AG04450 (cell line): ENCODE measurements at regions of chr11 and their contacts with region 1.

Region 1: GRCh38 chr11:60899046-60899936 is 7.1 kb downstream of the PRPF19 start:
- DNase-seq: peak; percentile 24
- H3K4me3 ChIP-seq: no peak overlapping the region
- H3K27ac ChIP-seq: peak overlapping the region; percentile 31
- H3K27me3 ChIP-seq: no peaks in the 10 kb centered on the region
- CTCF ChIP-seq: peak; percentile 99

Region 2: DNA sequence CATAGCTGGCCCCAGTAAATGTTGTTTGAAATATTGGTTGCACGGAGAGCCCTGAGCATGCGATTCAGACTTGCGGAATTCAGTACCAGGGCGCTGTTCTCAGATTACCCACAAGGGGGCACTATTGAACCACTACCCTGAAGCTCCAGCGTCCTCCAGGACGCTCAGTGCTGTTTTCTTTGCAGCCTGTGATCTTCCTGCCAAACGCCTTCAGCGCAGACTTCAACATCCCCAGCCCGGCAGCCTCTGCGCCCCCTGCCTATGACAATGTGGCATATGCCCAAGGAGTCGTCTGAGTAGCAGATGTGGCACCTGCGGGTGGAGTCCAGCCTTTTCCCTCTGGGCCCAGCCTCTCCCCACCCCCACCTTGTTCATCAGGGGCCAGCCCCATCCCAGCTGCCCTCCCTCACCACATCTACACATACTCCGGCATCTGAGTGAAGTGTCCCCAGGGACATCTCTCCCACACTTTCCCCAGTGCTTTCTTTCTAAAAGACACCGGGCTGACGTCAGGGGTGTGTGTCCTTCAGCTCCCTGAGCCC is 123.8 kb before region 1 on chr11:
- CTCF ChIA-PET with region 1: interaction called, 65 read pairs
- POLR2A ChIA-PET with region 1: no interaction called
- DNase-seq: peak; percentile 81
- H3K4me3 ChIP-seq: no peak overlapping the region
- H3K27ac ChIP-seq: no peak overlapping the region
- H3K27me3 ChIP-seq: peaks cover 3% of the 10 kb centered on the region
- CTCF ChIP-seq: peak; percentile 91

Region 3: DNA sequence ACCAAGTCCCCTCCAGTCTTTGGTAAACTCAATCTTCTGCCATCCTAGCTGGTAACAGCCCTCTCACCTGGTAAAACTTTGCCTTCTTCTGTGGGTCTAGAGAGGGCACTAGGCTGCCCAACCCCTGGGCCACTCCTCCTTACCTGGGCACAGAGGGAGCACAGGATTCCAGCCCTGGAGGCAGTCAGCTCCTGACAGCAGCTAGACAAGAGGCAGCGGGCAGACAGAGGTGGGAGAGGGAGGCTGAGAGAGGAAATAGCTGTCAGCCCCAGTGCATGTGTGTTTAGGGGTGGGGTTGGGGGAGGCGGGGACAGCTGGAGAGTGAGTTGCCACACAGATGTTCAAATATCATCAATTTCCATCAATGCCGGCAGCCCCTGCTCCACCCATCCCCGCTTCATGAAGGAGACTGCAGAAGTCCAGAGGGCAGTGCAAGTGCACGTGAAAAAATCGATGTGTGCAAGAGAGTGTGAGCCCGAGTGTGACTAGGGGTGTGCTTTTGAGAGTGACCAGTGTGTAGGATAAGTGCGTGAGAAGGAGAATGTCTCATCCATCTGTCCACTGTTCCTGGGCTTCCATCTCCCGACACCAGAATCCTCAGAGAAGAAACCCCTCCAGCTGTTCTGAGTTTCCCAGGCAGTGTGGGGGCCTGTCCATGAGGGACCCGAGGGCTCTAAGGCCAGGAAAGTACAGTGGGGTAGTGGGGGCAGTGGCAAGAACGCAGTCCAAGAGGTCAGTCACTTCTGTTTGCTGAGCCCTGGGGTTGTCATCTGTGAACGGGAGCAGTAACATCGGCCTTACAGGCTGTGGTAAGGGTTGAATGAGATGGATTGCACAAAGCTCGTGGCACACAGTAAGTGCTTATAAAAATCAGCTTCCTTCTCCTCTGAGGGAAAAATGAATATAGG is 43.3 kb before region 1 on chr11 and contains the start of gene PTGDR2:
- CTCF ChIA-PET with region 1: interaction called, 14 read pairs
- POLR2A ChIA-PET with region 1: no interaction called
- DNase-seq: no peak
- H3K4me3 ChIP-seq: no peak within 1 kb of the TSS
- H3K27ac ChIP-seq: no peak within 1 kb of the TSS
- H3K27me3 ChIP-seq: peaks cover 5% of the 10 kb centered on the region
- CTCF ChIP-seq: no peak
- polyA plus RNA-seq, gene PTGDR2: 0.84 and 0.92 TPM in 2 replicates

Region 4: DNA sequence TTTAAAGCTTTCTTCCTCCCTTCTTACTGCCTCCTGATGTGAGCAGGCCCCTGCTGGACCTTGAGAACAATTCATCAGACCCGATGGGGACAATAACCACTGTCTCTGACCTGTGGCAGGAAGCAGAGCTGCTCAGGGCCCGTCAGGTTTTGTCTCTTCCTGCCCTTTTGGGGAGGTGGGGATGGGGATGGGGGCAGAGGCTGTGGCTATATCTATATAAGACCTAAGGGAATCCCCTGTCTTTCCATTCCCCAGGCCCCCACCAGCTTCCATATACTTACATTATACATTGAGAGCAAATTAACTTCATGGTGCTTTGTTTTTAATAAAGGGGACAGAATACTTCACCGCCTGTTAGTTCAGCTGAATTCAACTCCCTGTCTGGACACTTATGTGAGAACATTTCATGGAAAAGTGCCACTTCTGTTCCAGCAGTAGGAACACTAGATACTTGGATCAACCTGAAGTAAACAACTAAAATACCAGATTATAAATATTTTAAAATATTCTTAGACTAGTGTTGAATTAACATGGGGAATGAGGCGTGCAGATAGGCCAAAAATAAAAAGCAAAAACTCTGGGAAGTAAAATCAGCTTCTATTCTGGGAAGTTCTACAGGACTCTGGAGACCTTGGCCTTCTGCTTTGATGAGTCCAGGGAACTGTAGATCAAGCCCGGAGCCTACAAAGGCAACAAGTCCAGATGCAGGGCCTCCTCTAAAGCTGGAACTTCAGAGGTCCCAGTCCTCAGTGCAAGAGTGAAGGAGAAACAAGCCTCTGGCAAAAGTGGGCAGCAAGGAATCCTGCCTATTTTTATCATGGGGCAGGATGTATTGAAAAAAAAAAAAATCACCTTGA is 20.8 kb before region 1 on chr11:
- CTCF ChIA-PET with region 1: interaction called, 24 read pairs
- POLR2A ChIA-PET with region 1: no interaction called
- DNase-seq: no peak
- H3K4me3 ChIP-seq: no peak overlapping the region
- H3K27ac ChIP-seq: no peak overlapping the region
- H3K27me3 ChIP-seq: no peaks in the 10 kb centered on the region
- CTCF ChIP-seq: no peak

Region 5: GRCh38 chr11:60913793-60914632 is 14.7 kb after region 1 on chr11 and contains the start of gene TMEM109:
- CTCF ChIA-PET with region 1: interaction called, 35 read pairs
- POLR2A ChIA-PET with region 1: interaction called, 6 read pairs
- DNase-seq: peak; percentile 59
- H3K4me3 ChIP-seq: peak within 1 kb of the TSS; percentile 80
- H3K27ac ChIP-seq: peak within 1 kb of the TSS; percentile 96
- H3K27me3 ChIP-seq: peaks cover 5% of the 10 kb centered on the region
- CTCF ChIP-seq: no peak
- polyA plus RNA-seq, gene TMEM109: 36.2 and 44.5 TPM in 2 replicates

Region 6: GRCh38 chr11:60954401-60954800 is 55.1 kb after region 1 on chr11:
- CTCF ChIA-PET with region 1: no interaction called
- POLR2A ChIA-PET with region 1: no interaction called
- DNase-seq: no peak
- H3K4me3 ChIP-seq: no peak overlapping the region
- H3K27ac ChIP-seq: no peak overlapping the region
- H3K27me3 ChIP-seq: peaks cover 10% of the 10 kb centered on the region
- CTCF ChIP-seq: no peak

Region 7: GRCh38 chr11:61347916-61348461 is 448.7 kb after region 1 on chr11:
- CTCF ChIA-PET with region 1: no interaction called
- POLR2A ChIA-PET with region 1: no interaction called
- DNase-seq: no peak
- H3K4me3 ChIP-seq: no peak overlapping the region
- H3K27ac ChIP-seq: no peak overlapping the region
- H3K27me3 ChIP-seq: no peaks in the 10 kb centered on the region
- CTCF ChIP-seq: no peak